ENCODE measurements at regions of chr15 and their contacts with region 1.

Region 1: DNA sequence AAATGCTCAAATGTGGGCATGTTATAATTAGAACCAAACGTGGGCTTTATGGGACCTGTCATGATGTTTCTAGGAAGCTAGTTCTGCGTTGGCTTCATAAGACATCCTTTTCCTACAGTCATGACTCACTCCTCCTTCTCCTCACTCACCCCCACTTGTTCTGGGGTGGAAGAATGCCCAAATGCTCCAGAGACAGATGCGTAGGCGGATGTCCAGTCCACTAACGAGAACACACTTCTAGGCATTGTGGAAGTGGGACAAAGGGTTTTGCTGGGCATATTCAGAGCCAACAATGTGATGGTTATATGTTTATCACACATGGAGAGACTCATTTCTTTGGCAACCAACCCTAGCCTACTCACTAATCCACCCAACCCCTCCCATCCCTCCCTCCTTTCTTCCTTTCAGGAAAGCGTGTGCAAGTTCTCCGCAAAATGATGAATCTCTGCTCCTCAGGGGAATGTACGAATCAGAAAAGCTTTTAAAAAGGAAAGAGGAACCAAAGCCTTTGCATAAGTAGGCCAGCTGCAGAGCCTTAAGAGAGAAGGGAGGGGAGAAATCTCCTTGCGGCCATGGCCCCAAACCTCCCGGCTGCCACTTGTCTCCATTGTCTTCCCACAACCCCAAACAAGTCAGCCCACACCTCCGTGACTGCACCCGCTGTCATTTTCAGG is 123.0 kb upstream of the SPRED1 start:
- H3K4me3 Mint-ChIP-seq: peak overlapping the region; percentile 55
- H3K27ac Mint-ChIP-seq: peak overlapping the region; percentile 96
- H3K4me1 Mint-ChIP-seq: peaks cover 70% of the 10 kb centered on the region
- H3K27me3 Mint-ChIP-seq: peaks cover 4% of the 10 kb centered on the region

Region 2: DNA sequence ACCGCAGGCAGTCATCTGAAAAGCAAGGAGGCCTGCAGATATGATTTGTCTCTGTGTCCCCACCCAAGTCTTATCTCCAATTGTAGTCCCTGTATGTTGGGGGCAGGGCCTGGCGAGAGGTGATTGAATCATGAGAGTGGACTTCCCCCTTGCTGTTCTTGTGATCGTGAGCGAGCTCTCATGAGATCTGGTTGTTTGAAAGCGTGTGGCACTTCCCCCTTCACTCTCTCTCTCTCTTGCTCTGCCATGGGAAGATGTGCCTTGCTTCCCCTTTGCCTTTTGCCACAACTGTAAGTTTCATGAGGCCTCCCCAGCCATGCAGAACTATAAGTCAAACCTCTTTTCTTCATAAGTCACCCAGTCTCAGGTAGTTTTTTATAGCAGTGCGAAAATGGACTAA is 111.9 kb before region 1 on chr15:
- intact Hi-C with region 1: loop called (anchors 5 kb)
- H3K4me3 Mint-ChIP-seq: no peak overlapping the region
- H3K27ac Mint-ChIP-seq: peak overlapping the region; percentile 94
- H3K4me1 Mint-ChIP-seq: peaks cover 66% of the 10 kb centered on the region
- H3K27me3 Mint-ChIP-seq: no peaks in the 10 kb centered on the region

Region 3: GRCh38 chr15:38059665-38060064 is 70.0 kb before region 1 on chr15:
- intact Hi-C with region 1: loop called (anchors 2 kb)
- H3K4me3 Mint-ChIP-seq: peak overlapping the region; percentile 28
- H3K27ac Mint-ChIP-seq: peak overlapping the region; percentile 88
- H3K4me1 Mint-ChIP-seq: peaks cover 76% of the 10 kb centered on the region
- H3K27me3 Mint-ChIP-seq: no peaks in the 10 kb centered on the region

Region 4: DNA sequence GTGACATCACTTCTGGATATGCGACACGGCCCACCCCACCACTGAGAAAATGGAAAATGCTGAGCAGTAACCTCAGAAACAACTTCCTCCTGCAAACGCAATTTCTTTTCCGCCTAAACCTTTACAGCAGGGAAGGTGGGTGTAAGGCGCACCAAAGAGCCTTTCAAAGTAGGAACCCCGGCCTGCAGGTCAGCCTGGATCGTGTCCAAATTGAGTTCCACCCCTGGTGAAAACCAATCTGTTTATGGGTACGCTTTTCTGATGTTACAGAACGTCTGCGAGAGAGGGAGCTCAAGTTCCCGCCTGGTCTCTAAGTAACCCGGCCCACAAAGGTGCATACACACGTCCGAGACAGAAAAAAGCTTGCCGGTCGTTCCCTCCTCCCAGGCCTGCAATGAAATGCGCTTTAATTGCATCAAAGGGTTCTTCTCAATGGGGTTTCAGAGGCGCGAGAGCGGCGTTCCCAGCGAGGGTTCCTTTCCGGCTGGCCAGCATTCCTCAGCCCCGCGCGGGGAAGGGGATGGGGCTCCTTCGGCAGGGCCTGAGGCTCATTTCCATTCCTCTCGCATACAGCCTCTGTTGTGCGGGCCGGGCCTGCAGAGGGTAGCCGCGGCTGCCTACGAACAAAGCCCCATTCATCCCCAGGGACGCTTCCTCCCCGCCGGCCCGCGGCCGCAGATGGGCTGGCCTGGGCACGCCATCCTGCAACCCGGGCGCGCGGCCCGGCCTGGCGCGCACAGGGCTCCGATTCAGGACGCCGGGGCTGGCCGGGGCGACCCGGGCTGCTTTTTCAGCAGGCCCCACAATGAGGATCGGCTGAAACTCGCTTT is 57.1 kb before region 1 on chr15:
- intact Hi-C with region 1: loop called (anchors 1 kb)
- H3K4me3 Mint-ChIP-seq: peak overlapping the region; percentile 69
- H3K27ac Mint-ChIP-seq: peak overlapping the region; percentile 99
- H3K4me1 Mint-ChIP-seq: peaks cover 78% of the 10 kb centered on the region
- H3K27me3 Mint-ChIP-seq: peaks cover 21% of the 10 kb centered on the region

Region 5: GRCh38 chr15:38084289-38084688 is 45.4 kb before region 1 on chr15:
- intact Hi-C with region 1: loop called (anchors 5 kb)
- H3K4me3 Mint-ChIP-seq: no peak overlapping the region
- H3K27ac Mint-ChIP-seq: peak overlapping the region; percentile 71
- H3K4me1 Mint-ChIP-seq: peaks cover 55% of the 10 kb centered on the region
- H3K27me3 Mint-ChIP-seq: peaks cover 2% of the 10 kb centered on the region